Activated T-helper 1 cell treated with anti-CD3 and anti-CD28 coated beads, Interleukin-12 subunit alpha, Interleukin-12 subunit beta, Interleukin-2, Interleukin-4 antibody, amounts not matched to agents 30 ng/mL and 10 ng/mL and 1 ng/mL, durations not matched to agents 14 hours and 24 hours and 36 hours (primary cell): ENCODE measurements at regions of chr11 and their contacts with region 1.

Region 1: DNA sequence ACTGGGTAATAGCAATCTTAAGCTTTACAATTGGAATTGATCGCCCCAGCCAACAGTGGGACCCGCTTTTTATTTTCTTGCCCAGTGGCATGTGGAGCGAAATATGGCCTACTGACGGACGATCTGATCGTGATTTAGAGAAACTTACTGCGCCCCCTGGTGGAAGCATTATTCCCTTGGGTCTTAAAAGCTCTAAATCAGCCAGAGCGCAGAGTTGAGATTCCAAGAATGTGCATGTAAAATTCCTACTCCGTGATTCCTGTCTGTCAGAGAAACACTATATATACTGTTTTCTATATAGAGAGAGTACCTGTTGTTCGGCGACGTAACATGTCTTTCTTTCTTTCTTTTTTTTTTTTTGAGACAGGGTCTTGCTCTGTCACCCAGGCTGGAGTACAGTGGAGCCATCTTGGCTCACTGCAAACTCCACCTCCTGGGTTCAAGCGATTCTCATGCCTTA is 3.7 kb upstream of the DPF2 start:
- DNase-seq: peak; percentile 67
- H3K4me3 Mint-ChIP-seq: no peak overlapping the region
- H3K27ac Mint-ChIP-seq: no peak overlapping the region
- H3K4me1 Mint-ChIP-seq: peaks cover 16% of the 10 kb centered on the region
- H3K27me3 Mint-ChIP-seq: peaks cover 4% of the 10 kb centered on the region

Region 2: DNA sequence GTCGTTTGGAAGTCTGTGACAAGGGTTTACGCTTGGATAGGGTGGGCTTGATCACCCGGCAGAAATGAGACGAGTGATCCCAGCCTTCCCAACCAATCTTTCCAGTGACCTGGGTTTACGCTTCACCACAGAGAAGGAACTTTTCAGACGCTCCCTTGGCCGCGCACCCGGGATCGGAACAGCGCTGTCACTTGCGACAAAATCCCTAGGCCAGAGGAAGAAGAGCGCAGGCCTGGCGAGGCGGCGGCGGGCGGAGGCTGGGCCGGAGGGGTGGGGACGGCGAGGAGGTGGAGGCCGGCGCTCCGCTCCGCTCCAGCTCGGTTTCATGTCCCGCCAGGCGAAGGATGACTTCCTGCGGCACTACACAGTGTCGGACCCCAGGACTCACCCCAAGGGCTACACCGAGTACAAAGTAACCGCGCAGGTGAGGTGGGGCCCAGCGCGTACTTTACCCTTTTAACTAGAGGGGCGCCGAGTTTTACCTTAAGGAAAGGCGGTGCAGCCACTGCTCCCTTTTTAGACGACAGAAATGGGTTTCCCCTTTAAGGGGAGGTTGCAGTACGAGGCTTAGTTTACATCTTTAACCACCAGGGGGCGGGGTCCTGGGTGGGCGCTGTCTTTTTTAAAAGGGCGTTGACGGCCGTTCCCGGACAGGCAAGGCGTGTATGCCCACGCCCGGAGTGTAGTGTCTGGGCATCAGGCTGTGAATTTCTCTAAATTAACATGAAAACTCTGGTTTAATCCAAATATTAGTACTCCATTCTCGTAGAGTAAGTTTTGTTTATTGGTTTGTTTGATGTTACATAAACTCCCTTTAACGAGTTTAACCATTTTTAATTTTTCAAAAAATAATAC is 302.5 kb before region 1 on chr11 and contains the start of gene SNX15:
- intact Hi-C with region 1: no loop called
- DNase-seq: peak; percentile 91
- H3K4me3 Mint-ChIP-seq: peak within 1 kb of the TSS; percentile 83
- H3K27ac Mint-ChIP-seq: peak within 1 kb of the TSS; percentile 83
- H3K4me1 Mint-ChIP-seq: peaks cover 23% of the 10 kb centered on the region
- H3K27me3 Mint-ChIP-seq: no peaks in the 10 kb centered on the region
- total RNA-seq, gene SNX15: 19.9 and 30.9 TPM in 2 replicates

Region 3: GRCh38 chr11:65204646-65205601 is 125.0 kb before region 1 on chr11:
- intact Hi-C with region 1: loop called (anchors 1 kb)
- DNase-seq: no peak
- H3K4me3 Mint-ChIP-seq: no peak overlapping the region
- H3K27ac Mint-ChIP-seq: no peak overlapping the region
- H3K4me1 Mint-ChIP-seq: no peaks in the 10 kb centered on the region
- H3K27me3 Mint-ChIP-seq: no peaks in the 10 kb centered on the region

Region 4: GRCh38 chr11:65225279-65226102 is 104.5 kb before region 1 on chr11:
- intact Hi-C with region 1: loop called (anchors 1 kb)
- DNase-seq: peak; percentile 34
- H3K4me3 Mint-ChIP-seq: peak overlapping the region; percentile 79
- H3K27ac Mint-ChIP-seq: no peak overlapping the region
- H3K4me1 Mint-ChIP-seq: peaks cover 9% of the 10 kb centered on the region
- H3K27me3 Mint-ChIP-seq: peaks cover 26% of the 10 kb centered on the region

Region 5: DNA sequence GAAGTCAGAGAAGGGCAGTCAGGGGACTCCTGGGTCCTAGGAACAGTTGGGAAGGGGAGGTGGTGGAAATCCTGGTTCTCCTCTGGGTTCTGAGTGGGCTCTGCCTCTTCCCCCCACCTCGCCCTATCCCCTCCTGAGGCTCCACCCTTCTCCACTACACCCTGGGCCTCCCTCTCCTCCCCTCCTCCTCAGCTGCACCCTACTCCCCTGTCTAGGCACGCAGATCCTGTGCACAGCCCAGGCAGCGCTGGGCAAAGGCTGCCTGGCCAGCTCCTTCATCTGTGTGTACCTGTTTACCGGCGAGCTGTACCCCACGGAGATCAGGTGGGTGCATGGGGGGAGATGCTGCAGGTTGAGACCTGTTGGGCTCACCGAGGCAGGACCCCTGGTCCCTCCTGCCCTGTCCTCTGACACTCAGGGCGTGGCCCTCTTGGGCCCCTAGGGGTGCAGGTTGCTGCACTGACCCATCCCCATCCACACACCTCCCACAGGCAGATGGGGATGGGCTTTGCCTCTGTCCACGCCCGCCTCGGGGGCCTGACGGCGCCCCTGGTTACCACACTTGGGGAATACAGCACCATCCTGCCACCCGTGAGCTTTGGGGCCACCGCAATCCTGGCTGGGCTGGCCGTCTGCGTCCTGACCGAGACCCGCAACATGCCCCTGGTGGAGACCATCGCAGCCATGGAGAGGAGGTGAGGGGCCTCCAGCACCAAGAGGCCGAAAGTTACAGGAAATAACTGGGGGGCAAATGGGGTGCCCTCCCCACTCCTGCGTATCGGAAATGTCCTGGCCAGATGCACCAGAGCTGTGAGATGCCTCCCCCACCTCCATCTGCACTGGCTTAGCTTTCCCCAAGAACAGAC is 93.5 kb before region 1 on chr11:
- intact Hi-C with region 1: no loop called
- DNase-seq: no peak
- H3K4me3 Mint-ChIP-seq: no peak overlapping the region
- H3K27ac Mint-ChIP-seq: no peak overlapping the region
- H3K4me1 Mint-ChIP-seq: no peaks in the 10 kb centered on the region
- H3K27me3 Mint-ChIP-seq: no peaks in the 10 kb centered on the region

Region 6: DNA sequence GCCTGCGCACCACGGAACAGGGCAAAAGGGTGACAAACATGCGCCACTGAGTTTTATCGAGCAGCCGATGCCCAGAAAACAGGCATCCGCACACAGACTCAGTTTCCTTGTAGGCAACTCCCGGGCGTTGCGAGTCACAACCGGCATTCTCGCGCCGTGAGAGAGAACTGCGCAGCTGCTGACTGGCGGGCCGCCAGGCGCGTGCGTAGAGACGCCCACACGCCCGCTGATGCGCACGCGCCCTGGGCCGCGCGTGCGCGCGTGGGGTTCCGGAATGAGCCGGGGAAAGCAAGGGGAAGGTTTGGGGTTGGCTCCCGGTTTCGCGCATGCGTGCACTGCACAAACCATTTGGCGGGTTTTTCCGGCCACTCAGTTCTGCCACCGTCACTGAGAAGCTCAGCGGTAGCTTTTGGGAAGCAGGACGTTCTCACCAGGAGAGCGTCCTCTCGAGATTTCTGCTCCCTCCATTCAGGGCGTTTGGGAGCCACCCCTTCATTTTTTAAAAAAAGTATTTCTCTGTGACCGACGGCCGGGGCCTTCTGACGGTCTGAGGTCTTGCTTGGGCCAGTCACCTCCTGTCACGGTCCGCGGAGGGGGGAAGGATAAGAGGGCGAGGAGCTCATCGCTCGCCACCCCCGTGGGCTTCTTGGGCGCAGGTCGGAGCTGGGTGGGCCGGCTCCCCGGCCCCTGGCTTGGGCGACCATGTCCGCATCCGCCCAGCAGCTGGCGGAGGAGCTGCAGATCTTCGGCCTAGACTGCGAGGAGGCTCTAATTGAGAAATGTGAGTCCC is 68.2 kb before region 1 on chr11 and contains the start of gene POLA2:
- intact Hi-C with region 1: loop called (anchors 5 kb)
- DNase-seq: peak; percentile 97
- H3K4me3 Mint-ChIP-seq: peak within 1 kb of the TSS; percentile 94
- H3K27ac Mint-ChIP-seq: peak within 1 kb of the TSS; percentile 97
- H3K4me1 Mint-ChIP-seq: peaks cover 47% of the 10 kb centered on the region
- H3K27me3 Mint-ChIP-seq: no peaks in the 10 kb centered on the region
- total RNA-seq, gene POLA2: 78.2 and 78.9 TPM in 2 replicates

Region 7: GRCh38 chr11:65274735-65275682 is 55.0 kb before region 1 on chr11:
- intact Hi-C with region 1: loop called (anchors 1 kb)
- DNase-seq: no peak
- H3K4me3 Mint-ChIP-seq: no peak overlapping the region
- H3K27ac Mint-ChIP-seq: no peak overlapping the region
- H3K4me1 Mint-ChIP-seq: peaks cover 16% of the 10 kb centered on the region
- H3K27me3 Mint-ChIP-seq: no peaks in the 10 kb centered on the region

Region 8: DNA sequence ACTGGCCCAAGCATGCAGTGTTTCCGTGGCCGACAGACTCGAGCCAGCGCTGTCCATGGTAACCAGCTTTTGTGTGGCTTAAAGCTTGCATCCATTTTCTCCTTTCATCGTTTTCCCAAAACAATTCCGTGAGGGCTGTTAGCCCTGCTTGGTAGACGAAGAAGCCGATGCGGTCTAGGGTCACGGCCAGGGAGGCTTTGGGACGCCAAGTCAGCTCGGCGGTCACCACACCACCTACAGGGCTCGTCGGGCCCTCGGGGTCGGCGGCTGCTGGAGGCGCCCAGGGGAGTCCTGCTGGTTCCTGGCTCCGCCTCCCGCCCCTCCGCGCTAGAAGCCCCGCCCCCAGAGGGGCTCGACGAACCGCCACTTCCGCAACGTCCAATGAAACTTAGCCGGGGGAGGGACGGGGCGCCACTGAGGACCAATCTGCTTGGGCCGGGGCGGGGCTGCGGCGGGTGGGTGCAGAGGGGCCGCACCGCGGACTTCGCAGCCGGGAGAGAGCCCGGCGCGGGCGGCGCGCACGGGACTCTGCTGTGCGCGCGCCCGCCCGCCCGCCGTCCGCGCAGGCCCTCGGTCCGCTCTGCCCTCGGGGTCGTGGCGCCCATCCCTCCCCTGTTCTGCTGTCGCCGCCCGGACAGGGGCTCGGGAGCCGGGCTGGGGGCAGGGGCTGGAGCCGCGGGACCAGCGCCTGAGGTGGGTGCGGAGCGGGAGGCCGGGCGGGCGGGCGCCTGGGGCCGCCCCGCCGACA is 24.5 kb after region 1 on chr11 and contains the start of gene TIGD3:
- intact Hi-C with region 1: loop called (anchors 1 kb)
- DNase-seq: peak; percentile 93
- H3K4me3 Mint-ChIP-seq: peak within 1 kb of the TSS; percentile 89
- H3K27ac Mint-ChIP-seq: peak within 1 kb of the TSS; percentile 81
- H3K4me1 Mint-ChIP-seq: peaks cover 8% of the 10 kb centered on the region
- H3K27me3 Mint-ChIP-seq: peaks cover 16% of the 10 kb centered on the region
- total RNA-seq, gene TIGD3: 1.1 TPM in 2 replicates

Region 9: DNA sequence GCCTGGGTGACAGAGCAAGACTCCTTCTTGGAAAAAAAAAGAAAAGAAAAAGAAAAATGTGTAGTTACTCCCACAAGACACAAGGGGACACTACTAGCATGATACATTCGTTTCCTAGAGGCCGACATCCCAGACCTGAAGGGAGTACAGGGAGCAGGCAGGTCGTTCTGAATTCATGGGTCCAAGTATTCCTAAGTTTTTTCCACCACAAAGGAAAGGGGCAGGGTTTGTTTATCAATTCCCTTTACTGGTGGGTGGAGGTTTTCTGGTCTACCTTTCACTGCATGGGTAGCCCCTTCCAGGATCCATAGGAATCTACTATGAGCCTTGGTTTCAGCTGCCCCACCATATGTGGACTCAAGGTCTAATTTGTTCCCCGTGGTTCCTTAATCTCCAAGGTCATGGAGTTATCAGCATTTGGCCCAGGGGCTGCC is 36.4 kb after region 1 on chr11:
- intact Hi-C with region 1: no loop called
- DNase-seq: no peak
- H3K4me3 Mint-ChIP-seq: no peak overlapping the region
- H3K27ac Mint-ChIP-seq: no peak overlapping the region
- H3K4me1 Mint-ChIP-seq: no peaks in the 10 kb centered on the region
- H3K27me3 Mint-ChIP-seq: no peaks in the 10 kb centered on the region